CD4-positive, alpha-beta T cell (primary cell): ENCODE measurements at regions of chr10 and their contacts with region 1.

Region 1: GRCh38 chr10:4849555-4850242 is 23.7 kb downstream of the AKR1E2 start:
- DNase-seq: peak; percentile 75 to 93 (median 82)
- ATAC-seq: peak; percentile 95
- H3K4me3 ChIP-seq: no peak overlapping the region
- H3K4me3 Mint-ChIP-seq: no peak overlapping the region
- H3K27ac ChIP-seq: no peak overlapping the region
- H3K27ac Mint-ChIP-seq: peak overlapping the region; percentile 45
- H3K4me1 ChIP-seq: peaks cover 9% of the 10 kb centered on the region
- H3K4me1 Mint-ChIP-seq: peaks cover 8% of the 10 kb centered on the region
- H3K27me3 ChIP-seq: no peaks in the 10 kb centered on the region
- H3K27me3 Mint-ChIP-seq: no peaks in the 10 kb centered on the region
- CTCF ChIP-seq: peak; percentile 97

Region 2: DNA sequence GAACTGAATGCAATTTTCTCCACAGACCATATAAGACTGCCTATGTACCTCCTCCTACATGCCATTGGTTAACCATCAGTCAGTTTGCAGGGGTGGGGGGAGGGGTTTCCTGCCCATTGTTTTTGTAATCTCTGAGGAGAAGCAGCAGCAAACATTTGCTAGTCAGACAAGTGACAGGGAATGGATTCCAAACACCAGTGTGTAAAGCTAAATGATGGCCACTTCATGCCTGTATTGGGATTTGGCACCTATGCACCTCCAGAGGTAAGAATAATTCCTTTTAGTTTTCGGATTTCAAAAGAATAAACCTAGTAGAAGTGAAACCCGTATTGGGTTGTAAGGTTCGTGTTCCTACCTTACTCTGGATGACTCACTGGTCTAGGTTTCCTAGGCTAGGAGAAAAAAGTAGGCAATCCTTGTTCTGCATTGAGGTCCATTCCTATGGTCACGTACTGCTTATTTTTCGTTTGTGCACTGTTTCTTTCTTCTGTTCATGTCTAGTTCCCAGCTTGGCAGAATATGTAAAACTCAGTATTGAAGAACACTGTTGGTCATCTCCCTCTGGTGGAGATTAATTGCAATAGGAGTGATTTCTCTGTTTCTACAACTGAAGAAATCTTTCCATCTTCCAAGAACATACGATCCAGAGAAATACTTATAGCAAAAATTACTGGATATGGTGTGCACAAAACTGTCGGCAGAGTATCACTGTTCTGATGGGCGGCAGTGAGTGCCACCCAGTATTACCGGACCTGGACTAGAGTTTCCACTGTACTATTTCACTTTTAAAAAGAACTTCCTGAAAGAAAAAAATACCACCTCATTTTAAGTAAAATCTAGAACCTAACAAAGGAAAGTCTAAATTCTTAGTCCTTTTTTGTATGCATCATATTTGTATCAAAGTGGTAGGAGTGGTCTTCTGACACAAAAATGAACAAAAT is 244.8 kb after region 1 on chr10 and contains the start of gene AKR1C3:
- CTCF ChIA-PET with region 1: interaction called, 5 read pairs
- POLR2A ChIA-PET with region 1: no interaction called
- intact Hi-C with region 1: loop called (anchors 1 to 10 kb)
- DNase-seq: peak in 5 of 14 experiments; percentile 2 to 69 (median 56)
- ATAC-seq: peak; percentile 83
- H3K4me3 ChIP-seq: peak within 1 kb of the TSS; percentile 66
- H3K4me3 Mint-ChIP-seq: peak within 1 kb of the TSS; percentile 86
- H3K27ac ChIP-seq: no peak within 1 kb of the TSS
- H3K27ac Mint-ChIP-seq: peak within 1 kb of the TSS; percentile 57
- H3K4me1 ChIP-seq: no peaks in the 10 kb centered on the region
- H3K4me1 Mint-ChIP-seq: peaks cover 8% of the 10 kb centered on the region
- H3K27me3 ChIP-seq: peaks cover 0 to 4% of the 10 kb centered on the region in 2 experiments
- H3K27me3 Mint-ChIP-seq: peaks cover 8% of the 10 kb centered on the region
- CTCF ChIP-seq: peak; percentile 65
- total RNA-seq, gene AKR1C3: 1.9 to 2.0 TPM

Region 3: DNA sequence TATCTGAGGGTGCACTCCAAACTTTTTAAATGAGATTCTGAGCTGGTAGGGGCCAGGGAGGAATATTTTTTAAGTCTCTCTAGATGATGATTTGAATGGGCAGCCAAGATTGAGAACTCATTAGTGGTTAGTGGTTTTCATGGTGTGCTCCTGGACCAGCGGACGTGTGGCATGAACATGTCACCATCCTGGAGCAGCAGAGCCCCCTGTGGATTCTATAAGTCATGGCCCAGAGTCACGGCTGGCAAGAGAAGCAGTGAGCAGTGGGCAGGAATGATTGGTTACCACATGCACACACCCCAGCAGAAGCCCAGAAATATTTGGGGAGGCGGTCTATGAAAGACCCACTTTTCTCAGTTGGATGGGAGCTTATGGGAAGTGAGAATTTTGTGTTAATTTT is 493.9 kb after region 1 on chr10:
- CTCF ChIA-PET with region 1: interaction called, 10 read pairs
- POLR2A ChIA-PET with region 1: no interaction called
- intact Hi-C with region 1: no loop called
- DNase-seq: peak in 6 of 14 experiments; percentile 17 to 58 (median 38)
- ATAC-seq: peak; percentile 37
- H3K4me3 ChIP-seq: no peak overlapping the region
- H3K4me3 Mint-ChIP-seq: no peak overlapping the region
- H3K27ac ChIP-seq: no peak overlapping the region
- H3K27ac Mint-ChIP-seq: no peak overlapping the region
- H3K4me1 ChIP-seq: no peaks in the 10 kb centered on the region
- H3K4me1 Mint-ChIP-seq: no peaks in the 10 kb centered on the region
- H3K27me3 ChIP-seq: no peaks in the 10 kb centered on the region
- H3K27me3 Mint-ChIP-seq: peaks cover under 1% of the 10 kb centered on the region
- CTCF ChIP-seq: peak; percentile 32

Region 4: DNA sequence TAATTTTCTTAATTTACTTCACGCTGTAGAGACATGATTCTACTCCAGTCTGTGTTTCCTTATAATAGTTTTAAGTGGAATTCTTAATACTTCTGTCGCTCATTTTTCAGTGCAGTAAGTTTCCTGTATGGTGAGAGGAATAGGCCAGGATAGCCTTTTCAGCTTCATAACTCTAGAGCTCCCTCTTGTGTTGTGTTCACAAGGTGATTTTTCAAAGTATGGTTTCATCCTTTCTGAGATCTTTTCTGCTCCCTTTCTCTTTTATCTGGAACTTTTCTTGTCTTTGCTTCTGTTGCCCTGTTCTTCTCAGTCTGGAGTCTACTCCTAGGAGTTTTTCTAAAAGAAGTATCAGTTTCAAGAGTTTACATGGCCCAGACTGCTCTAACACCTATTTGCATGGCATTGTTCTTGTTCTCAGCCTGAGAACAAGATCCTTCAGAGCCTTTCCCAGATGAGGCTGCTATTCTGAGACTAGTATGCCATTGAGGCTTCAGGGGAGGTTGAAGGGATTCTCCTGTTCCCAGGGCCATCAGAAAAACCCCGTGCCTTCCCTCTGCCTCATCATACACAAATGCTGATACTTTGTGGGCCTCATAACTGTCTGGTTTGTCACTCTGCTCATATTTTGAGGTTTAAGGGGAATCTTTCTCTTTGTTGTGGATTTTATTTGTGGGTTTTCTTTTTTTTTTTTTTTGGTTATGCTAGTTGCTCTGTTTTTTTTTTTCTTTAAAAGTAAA is 584.5 kb after region 1 on chr10:
- CTCF ChIA-PET with region 1: interaction called, 28 read pairs
- POLR2A ChIA-PET with region 1: interaction called, 6 read pairs
- intact Hi-C with region 1: loop called (anchors 1 kb)
- DNase-seq: peak in 3 of 14 experiments; percentile 61 to 66 (median 63)
- ATAC-seq: peak; percentile 83
- H3K4me3 ChIP-seq: no peak overlapping the region
- H3K4me3 Mint-ChIP-seq: no peak overlapping the region
- H3K27ac ChIP-seq: no peak overlapping the region
- H3K27ac Mint-ChIP-seq: no peak overlapping the region
- H3K4me1 ChIP-seq: peaks cover 4% of the 10 kb centered on the region
- H3K4me1 Mint-ChIP-seq: peaks cover 15% of the 10 kb centered on the region
- H3K27me3 ChIP-seq: no peaks in the 10 kb centered on the region
- H3K27me3 Mint-ChIP-seq: no peaks in the 10 kb centered on the region
- CTCF ChIP-seq: peak; percentile 74

Region 5: DNA sequence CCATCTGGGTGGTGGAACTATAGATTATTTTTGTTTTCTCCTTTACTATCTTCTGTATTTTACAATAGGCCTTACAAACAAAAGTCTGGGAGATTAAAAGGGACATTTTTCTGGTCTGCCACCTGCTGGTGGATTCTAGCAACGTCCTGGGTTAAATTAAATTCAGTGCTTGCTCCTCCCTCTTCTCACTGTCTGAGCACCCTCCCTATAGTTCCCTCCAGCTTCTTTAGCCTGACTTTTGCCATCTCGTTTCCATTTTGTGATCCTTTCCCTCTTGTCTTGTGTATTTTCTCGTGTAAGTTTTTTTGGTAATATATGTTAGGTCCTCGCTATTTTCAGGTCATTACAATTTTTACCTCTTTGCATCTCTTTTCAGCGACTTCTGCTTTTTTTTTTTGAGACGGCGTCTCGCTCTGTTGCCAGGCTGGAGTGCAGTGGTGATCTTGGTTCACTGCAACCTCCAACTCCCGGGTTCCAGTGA is 1023.9 kb after region 1 on chr10:
- CTCF ChIA-PET with region 1: no interaction called
- POLR2A ChIA-PET with region 1: no interaction called
- intact Hi-C with region 1: loop called in 1 of 2 experiments (anchors 10 kb)
- DNase-seq: peak; percentile 39 to 81 (median 58)
- ATAC-seq: peak; percentile 99
- H3K4me3 ChIP-seq: no peak overlapping the region
- H3K4me3 Mint-ChIP-seq: peak overlapping the region; percentile 12
- H3K27ac ChIP-seq: no peak overlapping the region
- H3K27ac Mint-ChIP-seq: no peak overlapping the region
- H3K4me1 ChIP-seq: no peaks in the 10 kb centered on the region
- H3K4me1 Mint-ChIP-seq: peaks cover 6% of the 10 kb centered on the region
- H3K27me3 ChIP-seq: no peaks in the 10 kb centered on the region
- H3K27me3 Mint-ChIP-seq: no peaks in the 10 kb centered on the region
- CTCF ChIP-seq: peak; percentile 68